ENCODE measurements at regions of chr5 and their contacts with region 1.

Region 1: GRCh38 chr5:141800617-141801016 is 77.6 kb downstream of the PCDH1 start:
- DNase-seq: no peak
- ATAC-seq: peak in 1 of 4 donors; percentile 10
- H3K4me3 ChIP-seq: no peak overlapping the region
- H3K27ac ChIP-seq: no peak overlapping the region
- H3K4me1 ChIP-seq: peaks cover 0 to 33% (median 20%) of the 10 kb centered on the region in 12 donors
- H3K27me3 ChIP-seq: peaks cover 0 to 11% (median 0%) of the 10 kb centered on the region in 9 donors
- CTCF ChIP-seq: no peak
- POLR2A ChIP-seq: no peak

Region 2: GRCh38 chr5:141762790-141763368 is 37.7 kb before region 1 on chr5:
- intact Hi-C with region 1: loop called in 3 of 10 experiments (anchors 2 to 5 kb)
- DNase-seq: peak in 3 of 5 donors; percentile 10 to 45 (median 42)
- ATAC-seq: peak; percentile 40 to 89 (median 56)
- H3K4me3 ChIP-seq: no peak overlapping the region
- H3K27ac ChIP-seq: no peak overlapping the region
- H3K4me1 ChIP-seq: peaks cover 0 to 29% (median 16%) of the 10 kb centered on the region in 12 donors
- H3K27me3 ChIP-seq: peaks cover 0 to 24% (median 8%) of the 10 kb centered on the region in 9 donors
- CTCF ChIP-seq: peak in 7 of 12 donors; percentile 19 to 46 (median 24)
- POLR2A ChIP-seq: no peak